H1 (cell line): ENCODE measurements at regions of chr21 and their contacts with region 1.

Region 1: DNA sequence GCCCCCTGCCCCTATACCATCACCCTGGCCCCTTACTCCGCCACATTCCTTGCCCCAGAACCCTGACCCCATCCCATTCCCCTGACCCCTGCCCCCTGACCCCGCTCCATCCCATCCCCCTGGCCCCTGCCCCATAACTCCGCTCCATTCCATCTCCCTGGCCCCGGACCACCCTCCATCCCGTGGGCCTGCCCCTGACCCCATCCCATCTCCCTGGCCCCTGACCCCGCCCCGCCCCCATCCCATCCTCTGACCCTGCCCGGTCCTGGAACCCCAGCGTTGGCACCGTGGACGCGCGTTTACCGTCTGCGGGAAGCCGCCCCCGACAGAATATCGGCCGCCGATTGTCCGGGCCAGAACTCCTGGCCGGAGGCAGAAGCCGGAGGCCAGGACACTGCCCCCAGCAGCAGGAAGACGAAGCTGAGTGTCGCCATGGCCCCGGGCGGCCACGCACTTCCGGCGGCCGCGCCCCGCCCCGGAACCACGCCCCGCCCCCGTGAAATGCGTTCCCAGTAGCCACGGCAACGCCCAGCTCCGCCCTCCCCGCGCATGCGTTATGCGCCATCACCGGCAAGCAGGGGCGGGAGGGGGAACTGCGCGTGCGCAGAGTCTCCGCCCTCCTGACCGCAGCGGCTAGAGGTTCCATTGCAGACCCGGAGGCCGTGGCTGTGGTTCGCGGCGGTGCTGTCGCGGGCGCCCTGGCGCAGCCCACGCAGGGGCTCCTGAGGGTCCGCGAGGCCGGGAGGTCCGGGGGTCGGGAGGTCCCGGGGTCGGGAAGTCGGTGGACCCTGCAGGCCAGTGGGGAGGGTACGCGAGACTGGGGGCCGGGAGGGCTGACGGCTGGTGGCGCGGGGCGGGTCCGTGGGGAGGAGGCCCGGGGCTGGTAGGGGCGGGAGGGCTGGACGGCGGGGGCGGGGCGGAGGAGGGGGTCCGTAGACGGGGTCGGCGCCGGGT is at the start of gene POFUT2:
- DNase-seq: peak; percentile 91 to 99
- H3K4me3 ChIP-seq: peak within 1 kb of the TSS; percentile 76 to 91 (median 80)
- H3K27ac ChIP-seq: peak within 1 kb of the TSS; percentile 56; the same call in 1 of the 2 replicates
- H3K4me1 ChIP-seq: peaks cover 0 to 12% (median 3%) of the 10 kb centered on the region in 4 experiments; a peak in 3 of 7 replicates
- H3K27me3 ChIP-seq: no peaks in the 10 kb centered on the region
- CTCF ChIP-seq: peak in 1 of 3 experiments; percentile 5; a peak in 1 of 4 replicates
- EP300 ChIP-seq: no peak
- POLR2A ChIP-seq: peak in 1 of 2 experiments; percentile 41; a peak in 1 of 3 replicates
- RAD21 ChIP-seq: no peak
- total RNA-seq, gene POFUT2: 32.1 and 34.6 TPM in 2 replicates

Region 2: DNA sequence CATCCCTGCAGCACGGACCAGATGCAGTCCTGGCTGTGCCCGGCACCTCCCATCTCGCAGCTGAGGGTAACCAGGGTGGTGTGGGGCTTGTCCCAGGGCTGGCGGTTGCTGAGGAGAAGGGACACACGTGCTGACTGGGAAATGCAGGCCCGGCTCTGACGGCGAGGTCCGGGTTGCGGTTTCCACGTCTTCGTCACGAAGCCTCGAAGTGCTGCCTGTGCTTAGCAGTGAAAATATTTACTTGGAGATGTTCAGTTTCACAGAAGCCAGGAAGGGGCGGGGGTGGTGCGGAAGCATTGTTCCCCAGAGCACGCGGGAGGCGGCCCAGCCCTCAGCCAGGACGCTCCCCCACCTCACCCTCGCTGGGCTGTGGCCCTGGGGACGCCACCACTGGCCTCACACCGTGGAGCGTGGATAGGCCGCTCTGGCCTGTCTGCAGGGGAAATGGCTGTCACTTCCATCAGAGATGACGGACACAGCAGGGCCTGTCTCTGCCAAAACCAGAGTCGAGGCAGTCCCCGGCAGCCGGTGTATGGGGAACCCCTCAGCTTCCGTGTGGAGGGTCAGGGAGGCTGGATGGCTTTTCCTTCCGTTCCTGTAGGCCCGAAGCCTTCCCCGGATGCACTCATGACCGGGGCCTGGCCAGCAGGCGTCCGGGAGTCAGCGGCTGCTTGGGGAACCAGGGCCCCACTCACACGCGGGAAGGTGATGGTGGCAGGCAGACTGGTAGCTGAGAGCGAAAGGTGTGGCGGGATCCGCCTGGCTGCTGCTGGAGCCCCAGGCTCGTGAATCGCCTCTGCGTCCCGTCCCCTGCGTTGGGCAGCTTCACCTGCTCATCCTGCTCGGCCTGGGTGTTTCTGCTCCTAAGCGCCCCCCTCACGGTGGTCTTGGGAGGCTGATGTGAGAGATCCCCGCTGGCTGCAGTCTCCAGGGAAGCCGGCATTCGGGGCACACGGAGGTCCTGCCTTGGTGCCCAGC is 14.7 kb after region 1 on chr21:
- CTCF ChIA-PET with region 1: interaction called, 24 read pairs
- POLR2A ChIA-PET with region 1: interaction called, 4 read pairs
- DNase-seq: no peak
- H3K4me3 ChIP-seq: no peak overlapping the region
- H3K27ac ChIP-seq: no peak overlapping the region
- H3K4me1 ChIP-seq: peaks cover 0 to 3% (median 0%) of the 10 kb centered on the region in 4 experiments; a peak in 3 of 7 replicates
- H3K27me3 ChIP-seq: no peaks in the 10 kb centered on the region
- CTCF ChIP-seq: no peak
- EP300 ChIP-seq: no peak
- POLR2A ChIP-seq: no peak
- RAD21 ChIP-seq: no peak

Region 3: GRCh38 chr21:45309069-45309986 is 21.6 kb after region 1 on chr21:
- CTCF ChIA-PET with region 1: interaction called, 24 read pairs
- POLR2A ChIA-PET with region 1: interaction called, 3 read pairs
- DNase-seq: peak; percentile 39 to 95
- H3K4me3 ChIP-seq: no peak overlapping the region
- H3K27ac ChIP-seq: no peak overlapping the region
- H3K4me1 ChIP-seq: peaks cover 0 to 3% (median 1%) of the 10 kb centered on the region in 4 experiments; a peak in 4 of 7 replicates
- H3K27me3 ChIP-seq: peaks cover 0 to 3% (median 0%) of the 10 kb centered on the region in 4 experiments; a peak in 3 of 7 replicates
- CTCF ChIP-seq: peak in 2 of 3 experiments; percentile 85 to 90; a peak in 3 of 4 replicates
- EP300 ChIP-seq: no peak
- POLR2A ChIP-seq: no peak
- RAD21 ChIP-seq: peak; percentile 65 to 71

Region 4: DNA sequence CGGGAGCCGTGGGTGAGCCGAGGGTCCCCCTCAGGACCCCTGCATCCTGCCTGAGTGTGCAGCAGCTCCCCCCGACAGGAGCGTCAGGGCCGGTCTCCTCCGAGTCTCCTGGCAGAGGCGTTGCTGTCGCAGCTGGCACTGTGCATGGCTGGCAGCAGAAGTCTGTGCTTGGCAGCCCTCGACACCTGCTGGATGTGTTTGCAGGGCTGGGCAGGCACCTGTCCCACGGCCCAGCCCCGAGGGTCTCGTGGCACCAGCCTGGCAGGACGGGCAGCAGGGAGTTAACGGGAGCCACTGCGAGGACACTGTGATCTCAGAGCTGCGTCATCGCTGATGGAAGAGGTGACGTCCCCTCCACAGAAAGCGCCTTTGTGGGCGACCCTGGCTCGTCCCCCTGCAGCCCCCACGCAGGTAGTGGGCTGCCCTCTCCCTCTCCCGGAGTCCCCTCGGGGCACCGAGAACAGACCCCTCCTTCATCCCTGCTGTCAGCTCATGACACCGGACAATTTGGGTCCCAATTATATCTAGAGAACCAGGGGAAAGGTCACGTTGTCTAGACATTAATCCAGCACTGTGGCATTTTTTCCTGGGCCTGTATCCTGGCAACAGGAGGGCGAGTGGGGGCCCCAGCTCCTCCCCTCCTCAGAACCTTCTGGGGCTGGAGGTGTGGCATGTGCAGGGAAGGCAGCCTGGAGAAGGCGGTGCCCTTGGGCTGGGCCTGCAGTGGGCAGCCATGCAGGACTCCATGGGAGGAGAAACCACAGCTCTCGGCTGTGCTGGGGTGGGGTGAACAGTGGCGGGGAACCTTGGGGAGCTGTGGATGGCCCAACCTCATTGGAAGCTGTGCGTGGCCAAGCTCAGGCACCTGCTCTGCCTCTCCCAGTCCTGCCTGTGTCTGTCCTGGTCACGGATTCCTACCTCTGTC is 132.6 kb after region 1 on chr21:
- CTCF ChIA-PET with region 1: interaction called, 15 read pairs
- POLR2A ChIA-PET with region 1: interaction called, 3 read pairs
- DNase-seq: no peak
- H3K4me3 ChIP-seq: no peak overlapping the region
- H3K27ac ChIP-seq: no peak overlapping the region
- H3K4me1 ChIP-seq: peaks cover 4 to 31% (median 23%) of the 10 kb centered on the region in 4 experiments
- H3K27me3 ChIP-seq: no peaks in the 10 kb centered on the region
- CTCF ChIP-seq: no peak
- EP300 ChIP-seq: no peak
- POLR2A ChIP-seq: no peak
- RAD21 ChIP-seq: no peak

Region 5: DNA sequence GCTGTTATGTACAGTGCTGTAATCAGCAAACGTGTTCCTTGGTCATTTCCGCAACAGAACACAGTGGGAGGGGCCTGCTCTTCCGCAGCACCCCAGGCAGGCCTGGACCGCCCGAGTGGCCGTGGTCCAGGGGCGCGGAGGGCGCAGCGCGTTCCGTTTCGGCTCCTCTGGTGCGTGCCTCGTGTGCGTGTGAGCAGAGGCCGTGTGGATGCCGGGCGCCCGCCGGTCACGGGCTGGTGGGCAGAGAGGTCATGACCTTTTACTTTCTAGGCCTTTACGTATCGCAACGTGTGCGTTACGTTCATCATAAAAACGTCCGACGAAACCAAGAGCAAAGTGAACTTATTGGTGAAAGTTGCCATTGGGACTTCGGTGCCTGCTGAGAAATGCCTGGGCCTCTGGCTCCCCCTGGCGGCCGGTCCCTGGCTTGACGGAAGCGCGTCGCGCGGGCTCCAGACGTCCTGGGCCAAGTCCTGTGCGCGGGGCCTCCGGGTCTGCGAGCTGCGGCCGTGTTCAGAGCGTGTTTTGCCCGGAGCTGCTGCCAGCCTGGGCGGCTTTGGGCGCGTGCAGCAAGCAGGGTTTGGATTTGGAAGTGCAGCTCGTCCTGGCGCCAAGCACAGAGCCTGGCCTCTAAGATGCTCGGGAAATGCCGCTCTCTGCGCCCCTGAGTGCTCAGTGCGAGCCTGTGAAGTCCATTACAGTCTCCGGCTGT is 151.6 kb after region 1 on chr21:
- CTCF ChIA-PET with region 1: interaction called, 52 read pairs
- POLR2A ChIA-PET with region 1: interaction called, 3 read pairs
- DNase-seq: peak; percentile 72 to 96
- H3K4me3 ChIP-seq: no peak overlapping the region
- H3K27ac ChIP-seq: no peak overlapping the region
- H3K4me1 ChIP-seq: peaks cover 0 to 8% (median 2%) of the 10 kb centered on the region in 4 experiments; a peak in 3 of 7 replicates
- H3K27me3 ChIP-seq: no peaks in the 10 kb centered on the region
- CTCF ChIP-seq: peak in 2 of 3 experiments; percentile 95 to 97; a peak in 3 of 4 replicates
- EP300 ChIP-seq: no peak
- POLR2A ChIP-seq: no peak
- RAD21 ChIP-seq: peak; percentile 98 to 99

Region 6: GRCh38 chr21:45470773-45471524 is 183.2 kb after region 1 on chr21:
- CTCF ChIA-PET with region 1: interaction called, 10 read pairs
- POLR2A ChIA-PET with region 1: no interaction called
- DNase-seq: no peak
- H3K4me3 ChIP-seq: no peak overlapping the region
- H3K27ac ChIP-seq: no peak overlapping the region
- H3K4me1 ChIP-seq: no peaks in the 10 kb centered on the region; a peak in 1 of 7 replicates
- H3K27me3 ChIP-seq: no peaks in the 10 kb centered on the region
- CTCF ChIP-seq: no peak
- EP300 ChIP-seq: no peak
- POLR2A ChIP-seq: no peak
- RAD21 ChIP-seq: no peak

Region 7: GRCh38 chr21:45481977-45482898 is 194.5 kb after region 1 on chr21:
- CTCF ChIA-PET with region 1: no interaction called
- POLR2A ChIA-PET with region 1: no interaction called
- DNase-seq: no peak
- H3K4me3 ChIP-seq: no peak overlapping the region
- H3K27ac ChIP-seq: no peak overlapping the region
- H3K4me1 ChIP-seq: peaks cover 0 to 1% (median under 1%) of the 10 kb centered on the region in 4 experiments; a peak in 3 of 7 replicates
- H3K27me3 ChIP-seq: no peaks in the 10 kb centered on the region
- CTCF ChIP-seq: no peak
- EP300 ChIP-seq: no peak
- POLR2A ChIP-seq: no peak
- RAD21 ChIP-seq: no peak

Region 8: DNA sequence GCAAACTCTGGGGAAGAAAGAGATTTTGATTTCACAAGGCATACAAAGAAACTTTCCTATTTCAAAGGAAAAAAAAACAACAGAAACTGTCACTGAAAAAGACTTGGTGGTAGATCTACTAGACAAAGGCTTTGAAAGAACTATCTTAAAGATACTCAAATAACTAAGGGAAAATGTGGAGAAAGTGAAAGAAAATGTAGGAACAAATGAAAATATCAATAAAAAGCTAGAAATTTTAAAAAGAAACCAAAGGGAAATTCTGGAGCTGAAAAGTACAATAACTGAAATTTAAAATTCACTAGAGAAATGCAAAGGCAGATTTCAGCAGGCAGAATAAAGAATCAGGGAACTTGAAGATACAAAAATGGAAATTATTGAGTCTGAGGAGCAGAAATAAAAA is 816.4 kb after region 1 on chr21:
- CTCF ChIA-PET with region 1: no interaction called
- POLR2A ChIA-PET with region 1: interaction called, 10 read pairs
- DNase-seq: no peak
- H3K4me3 ChIP-seq: no peak overlapping the region
- H3K27ac ChIP-seq: no peak overlapping the region
- H3K4me1 ChIP-seq: no peaks in the 10 kb centered on the region; a peak in 2 of 7 replicates
- H3K27me3 ChIP-seq: peaks cover 0 to 3% (median 3%) of the 10 kb centered on the region in 4 experiments; a peak in 4 of 7 replicates
- CTCF ChIP-seq: no peak
- EP300 ChIP-seq: no peak
- POLR2A ChIP-seq: no peak
- RAD21 ChIP-seq: no peak